Posterior cingulate gyrus (tissue), 11 donors: ENCODE measurements at regions of chr2 and their contacts with region 1.

Region 1: DNA sequence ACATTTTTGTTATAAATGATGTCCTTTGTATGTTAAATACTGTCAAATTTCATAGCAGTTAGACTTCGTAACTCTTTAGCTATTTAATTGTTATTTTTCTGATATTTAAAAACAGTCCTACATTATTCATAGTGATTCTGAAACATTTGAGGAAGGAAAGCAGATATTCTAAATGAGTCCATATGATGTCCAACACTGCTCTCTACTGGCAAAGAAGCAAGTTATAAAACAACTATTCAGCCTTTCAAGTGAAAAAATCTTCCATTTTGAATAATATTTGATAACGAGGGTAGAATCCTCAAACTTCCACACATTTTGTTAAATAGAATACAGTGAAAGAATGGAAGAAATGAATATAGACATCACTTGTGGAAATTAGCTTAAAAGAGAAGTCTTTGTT is 220.8 kb downstream of the GULP1 start:
- DNase-seq: no peak

Region 2: DNA sequence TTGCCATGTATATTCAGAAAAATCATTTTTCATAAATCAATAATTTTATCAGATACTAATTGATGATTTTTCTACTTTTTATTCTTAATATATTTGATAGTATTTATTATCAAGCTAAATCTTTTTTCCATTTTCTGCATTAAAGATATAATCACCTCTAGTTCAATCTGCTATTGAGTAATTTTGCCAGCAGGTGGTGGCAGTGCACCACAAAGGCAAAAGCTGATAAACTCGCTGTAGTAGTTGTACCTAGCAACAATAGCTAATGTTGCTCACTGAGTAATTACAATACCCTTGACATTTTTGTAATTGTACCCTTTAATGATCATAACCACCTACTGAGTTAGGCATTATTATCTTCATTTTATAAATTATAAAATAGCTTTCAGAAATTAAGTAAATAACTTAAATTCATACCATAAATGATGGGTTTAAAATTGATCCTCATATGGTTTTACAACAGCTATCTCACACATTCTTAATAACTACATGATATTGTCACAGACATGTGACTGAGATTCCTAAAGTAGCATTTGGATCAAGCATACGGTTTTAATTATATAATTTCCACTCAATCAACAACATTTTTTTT is 1012.4 kb before region 1 on chr2:
- intact Hi-C with region 1: loop called (anchors 2 kb)
- DNase-seq: peak in 9 of 10 donors; percentile 27 to 88 (median 54)

Region 3: GRCh38 chr2:188853307-188853706 is 340.9 kb after region 1 on chr2:
- intact Hi-C with region 1: no loop called
- DNase-seq: no peak